ENCODE measurements at regions of chr15 and their contacts with region 1.

Region 1: DNA sequence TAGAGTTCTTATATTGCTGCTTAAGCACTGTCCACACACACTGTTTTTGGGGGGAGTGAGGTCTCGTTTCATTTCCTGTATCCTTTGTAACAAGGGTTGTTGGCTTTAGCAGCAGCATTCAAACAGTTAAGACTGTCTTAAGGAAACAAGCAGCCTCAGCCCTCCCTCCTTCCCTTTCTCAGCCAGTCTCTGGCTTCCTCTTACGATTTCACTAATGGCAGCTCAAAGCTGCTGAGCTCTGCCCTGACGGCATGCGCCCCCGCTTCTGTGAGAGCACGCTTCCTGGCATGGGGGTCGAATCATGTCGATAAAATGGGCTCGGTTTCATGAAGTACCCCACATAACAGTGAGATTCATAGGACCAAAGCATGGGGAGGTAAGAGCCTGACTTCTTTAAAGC is 105.0 kb downstream of the KLHL25 start:
- DNase-seq: peak; percentile 53 to 83 (median 70)
- ATAC-seq: peak; percentile 79 to 90 (median 84)
- H3K4me3 ChIP-seq: peak overlapping the region; percentile 65 to 94
- H3K4me3 Mint-ChIP-seq: peak overlapping the region; percentile 96 to 98 (median 98)
- H3K27ac ChIP-seq: peak overlapping the region; percentile 93
- H3K27ac Mint-ChIP-seq: peak overlapping the region; percentile 98 to 99
- H3K4me1 ChIP-seq: peaks cover 33 to 51% of the 10 kb centered on the region in 2 experiments
- H3K4me1 Mint-ChIP-seq: peaks cover 70 to 77% (median 76%) of the 10 kb centered on the region in 3 donors
- H3K27me3 ChIP-seq: no peaks in the 10 kb centered on the region
- H3K27me3 Mint-ChIP-seq: no peaks in the 10 kb centered on the region

Region 2: DNA sequence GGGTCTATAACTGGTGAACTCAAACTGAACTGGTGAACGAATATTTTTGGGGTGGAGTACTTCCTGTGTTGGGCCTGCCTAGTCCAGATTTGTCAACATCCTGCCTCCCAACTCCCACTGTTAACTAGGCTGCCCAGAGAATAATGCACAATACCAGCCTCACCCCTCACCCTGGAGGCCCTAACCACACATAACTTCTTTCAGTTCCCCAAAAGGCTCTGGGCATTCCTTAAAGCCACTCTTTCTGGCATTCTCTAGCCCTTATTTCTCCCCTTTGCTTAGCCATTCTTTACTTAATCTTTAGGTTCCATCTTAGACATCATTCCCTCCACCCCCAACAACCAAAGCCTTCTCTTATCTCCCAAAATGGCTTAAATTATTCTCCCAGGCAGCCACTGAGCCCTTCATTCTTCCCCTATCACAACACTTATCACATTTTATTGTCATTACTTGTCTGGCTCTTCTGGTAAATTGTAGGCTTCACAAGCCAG is 964.7 kb before region 1 on chr15:
- CTCF ChIA-PET with region 1: no interaction called
- POLR2A ChIA-PET with region 1: no interaction called
- DNase-seq: peak in 16 of 35 experiments; percentile 9 to 53 (median 26)
- ATAC-seq: peak; percentile 68 to 88 (median 78)
- H3K4me3 ChIP-seq: no peak overlapping the region
- H3K4me3 Mint-ChIP-seq: peak overlapping the region; percentile 55 to 66 (median 66)
- H3K27ac ChIP-seq: peak overlapping the region; percentile 83
- H3K27ac Mint-ChIP-seq: peak overlapping the region; percentile 97 to 98
- H3K4me1 ChIP-seq: peaks cover 37 to 65% of the 10 kb centered on the region in 2 experiments
- H3K4me1 Mint-ChIP-seq: peaks cover 52 to 66% (median 65%) of the 10 kb centered on the region in 3 donors
- H3K27me3 ChIP-seq: no peaks in the 10 kb centered on the region
- H3K27me3 Mint-ChIP-seq: no peaks in the 10 kb centered on the region

Region 3: GRCh38 chr15:85554852-85555521 is 134.7 kb before region 1 on chr15:
- CTCF ChIA-PET with region 1: no interaction called
- POLR2A ChIA-PET with region 1: no interaction called
- DNase-seq: no peak
- ATAC-seq: no peak
- H3K4me3 ChIP-seq: no peak overlapping the region
- H3K4me3 Mint-ChIP-seq: no peak overlapping the region
- H3K27ac ChIP-seq: no peak overlapping the region
- H3K27ac Mint-ChIP-seq: peak overlapping the region; percentile 24 to 33
- H3K4me1 ChIP-seq: peaks cover 6 to 7% of the 10 kb centered on the region in 2 experiments
- H3K4me1 Mint-ChIP-seq: peaks cover 44 to 55% (median 51%) of the 10 kb centered on the region in 3 donors
- H3K27me3 ChIP-seq: no peaks in the 10 kb centered on the region
- H3K27me3 Mint-ChIP-seq: no peaks in the 10 kb centered on the region

Region 4: DNA sequence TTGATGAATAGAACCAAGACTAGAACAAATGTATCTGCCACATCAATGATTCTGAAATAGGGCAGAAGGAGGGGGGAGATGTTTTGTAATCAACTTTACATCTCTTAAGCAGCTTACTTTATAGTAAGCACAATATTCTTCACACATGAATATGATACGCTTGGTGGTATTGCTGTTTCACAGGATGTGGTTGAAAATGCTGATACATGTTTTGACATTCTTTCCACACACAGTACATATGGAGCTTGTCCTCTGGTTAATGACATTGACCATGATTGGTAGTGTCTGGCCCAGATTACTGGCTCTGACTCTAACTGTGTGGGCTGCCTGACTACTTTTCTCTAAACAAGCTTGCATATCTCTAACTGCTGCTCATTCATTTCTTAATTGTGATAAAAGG is 63.9 kb before region 1 on chr15:
- CTCF ChIA-PET with region 1: no interaction called
- POLR2A ChIA-PET with region 1: interaction called in 1 of 2 experiments, 10 read pairs
- DNase-seq: peak in 14 of 35 experiments; percentile 6 to 70 (median 26)
- ATAC-seq: peak; percentile 64 to 82 (median 77)
- H3K4me3 ChIP-seq: no peak overlapping the region
- H3K4me3 Mint-ChIP-seq: peak overlapping the region; percentile 11 to 69 (median 66)
- H3K27ac ChIP-seq: peak overlapping the region; percentile 69
- H3K27ac Mint-ChIP-seq: peak overlapping the region; percentile 81 to 96
- H3K4me1 ChIP-seq: peaks cover 27 to 29% of the 10 kb centered on the region in 2 experiments
- H3K4me1 Mint-ChIP-seq: peaks cover 71 to 78% (median 77%) of the 10 kb centered on the region in 3 donors
- H3K27me3 ChIP-seq: no peaks in the 10 kb centered on the region
- H3K27me3 Mint-ChIP-seq: no peaks in the 10 kb centered on the region

Region 5: DNA sequence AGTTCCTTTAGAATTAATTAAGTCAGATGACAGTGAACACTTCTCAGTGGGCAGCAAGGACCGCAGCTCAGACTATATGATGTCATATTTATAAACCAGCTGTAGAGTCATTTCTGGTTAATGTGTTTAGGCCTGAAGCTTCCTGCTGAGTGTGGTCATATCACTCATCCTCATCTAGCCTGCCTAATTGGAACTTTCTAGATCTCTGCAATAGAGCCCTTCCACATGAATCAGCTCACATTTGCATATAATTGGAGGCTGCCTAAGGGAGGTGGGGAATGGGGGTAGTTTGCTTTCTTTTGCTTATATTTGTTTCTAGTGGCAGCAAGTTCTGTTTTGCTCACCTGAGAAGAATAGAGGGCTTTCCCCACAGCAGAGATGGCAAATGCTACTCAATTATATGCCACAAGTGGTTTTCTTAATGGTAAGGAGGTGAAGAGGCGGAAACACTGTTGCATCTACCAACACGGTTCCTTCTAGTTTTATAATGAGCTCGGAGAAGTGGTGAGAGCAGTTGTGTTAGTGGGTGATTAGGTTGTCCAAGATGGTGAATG is 43.1 kb before region 1 on chr15:
- CTCF ChIA-PET with region 1: interaction called in 1 of 2 experiments, 4 read pairs
- POLR2A ChIA-PET with region 1: interaction called in 1 of 2 experiments, 12 read pairs
- DNase-seq: peak in 21 of 35 experiments; percentile 3 to 78 (median 24)
- ATAC-seq: peak; percentile 63 to 80 (median 70)
- H3K4me3 ChIP-seq: no peak overlapping the region
- H3K4me3 Mint-ChIP-seq: peak overlapping the region in 1 of 3 donors; percentile 12
- H3K27ac ChIP-seq: peak overlapping the region; percentile 90
- H3K27ac Mint-ChIP-seq: peak overlapping the region; percentile 86 to 89
- H3K4me1 ChIP-seq: peaks cover 11 to 36% of the 10 kb centered on the region in 2 experiments
- H3K4me1 Mint-ChIP-seq: peaks cover 38 to 55% (median 52%) of the 10 kb centered on the region in 3 donors
- H3K27me3 ChIP-seq: no peaks in the 10 kb centered on the region
- H3K27me3 Mint-ChIP-seq: no peaks in the 10 kb centered on the region

Region 6: DNA sequence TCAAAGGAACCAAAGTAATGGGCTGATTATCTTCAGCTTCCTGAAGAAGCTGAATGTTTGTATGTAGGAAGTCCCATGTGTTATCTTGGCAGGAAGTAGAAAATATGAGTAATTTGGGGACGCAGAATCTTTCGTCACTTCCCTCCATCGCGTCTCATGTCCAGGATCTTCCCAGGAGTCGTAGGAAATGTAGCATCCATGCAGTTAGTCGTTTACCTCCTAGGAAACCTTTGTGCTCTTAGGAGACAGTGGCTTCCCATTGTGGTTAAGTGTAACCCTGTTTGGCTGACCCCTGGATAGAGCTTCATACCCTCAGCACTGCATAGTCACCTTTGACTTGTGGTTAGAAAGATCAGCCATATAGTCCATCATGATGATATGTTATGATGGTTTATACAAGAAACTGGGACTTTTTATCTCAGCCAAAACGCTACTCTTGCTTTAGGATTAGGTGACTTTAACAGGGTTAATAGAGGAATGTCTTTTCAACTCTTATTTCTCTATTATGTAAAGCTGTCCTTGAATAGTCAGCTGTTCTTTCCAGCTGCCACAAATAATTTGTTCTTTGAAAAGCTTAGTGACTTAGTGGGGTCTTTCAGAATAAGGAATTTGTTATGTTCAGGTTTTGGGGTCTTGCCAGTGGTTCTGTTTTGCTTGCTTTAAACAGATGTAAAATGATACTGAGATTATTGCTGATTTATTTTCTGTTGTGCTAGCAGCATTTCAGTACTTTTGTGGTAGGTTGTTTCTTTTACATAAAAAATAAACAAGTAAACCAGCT is 12.8 kb after region 1 on chr15:
- CTCF ChIA-PET with region 1: interaction called in 1 of 2 experiments, 19 read pairs
- POLR2A ChIA-PET with region 1: interaction called, 4 to 42 read pairs
- DNase-seq: peak in 6 of 35 experiments; percentile 18 to 77 (median 26)
- ATAC-seq: peak; percentile 15 to 50 (median 46)
- H3K4me3 ChIP-seq: peak overlapping the region; percentile 32 to 36
- H3K4me3 Mint-ChIP-seq: peak overlapping the region; percentile 67 to 80 (median 74)
- H3K27ac ChIP-seq: peak overlapping the region; percentile 91
- H3K27ac Mint-ChIP-seq: peak overlapping the region; percentile 89 to 98
- H3K4me1 ChIP-seq: peaks cover 41 to 67% of the 10 kb centered on the region in 2 experiments
- H3K4me1 Mint-ChIP-seq: peaks cover 74 to 86% (median 84%) of the 10 kb centered on the region in 3 donors
- H3K27me3 ChIP-seq: no peaks in the 10 kb centered on the region
- H3K27me3 Mint-ChIP-seq: no peaks in the 10 kb centered on the region

Region 7: DNA sequence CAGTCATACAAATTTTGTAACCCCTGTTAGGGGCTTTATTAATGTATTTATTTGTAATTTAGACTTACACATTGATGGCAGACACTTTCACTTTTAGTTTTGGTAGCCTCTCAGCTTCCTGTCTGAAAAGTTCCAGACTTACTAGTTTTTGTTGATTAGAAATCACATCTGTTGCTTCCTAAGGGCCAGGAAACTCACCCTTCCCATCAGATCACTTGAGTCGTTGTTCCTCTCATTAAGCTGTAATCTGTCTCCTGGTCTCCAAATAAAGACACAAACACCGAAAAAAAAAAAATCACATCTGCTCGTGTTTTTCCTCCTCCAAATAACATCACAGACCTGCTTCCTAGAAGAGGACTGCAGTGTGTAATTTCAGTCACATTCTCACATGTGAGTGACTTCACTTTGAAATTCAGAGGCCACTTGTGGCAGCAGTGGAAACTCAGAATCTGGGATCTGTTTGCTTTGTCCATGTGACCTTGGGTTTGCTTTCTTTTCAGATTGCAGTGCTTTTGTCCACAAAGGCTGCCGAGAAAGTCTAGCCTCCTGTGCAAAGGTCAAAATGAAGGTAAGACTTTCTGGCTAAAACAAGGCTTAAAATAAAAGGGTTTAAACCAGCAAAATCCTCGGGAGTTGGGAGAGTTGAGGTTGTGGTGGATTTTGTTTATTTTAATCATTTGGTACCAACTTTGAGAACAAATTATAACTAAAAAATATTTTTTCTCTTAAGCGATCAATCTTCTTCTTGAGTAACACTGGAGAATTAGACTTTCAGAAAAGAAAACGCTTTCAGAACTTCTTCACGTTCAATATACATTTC is 18.0 kb after region 1 on chr15:
- CTCF ChIA-PET with region 1: interaction called in 1 of 2 experiments, 19 read pairs
- POLR2A ChIA-PET with region 1: interaction called, 4 to 42 read pairs
- DNase-seq: peak in 1 of 35 experiments; percentile 73
- ATAC-seq: peak; percentile 38 to 65 (median 42)
- H3K4me3 ChIP-seq: peak overlapping the region; percentile 34 to 46
- H3K4me3 Mint-ChIP-seq: peak overlapping the region; percentile 73 to 84 (median 82)
- H3K27ac ChIP-seq: peak overlapping the region; percentile 91
- H3K27ac Mint-ChIP-seq: peak overlapping the region; percentile 95 to 98
- H3K4me1 ChIP-seq: peaks cover 43 to 65% of the 10 kb centered on the region in 2 experiments
- H3K4me1 Mint-ChIP-seq: peaks cover 74 to 88% (median 87%) of the 10 kb centered on the region in 3 donors
- H3K27me3 ChIP-seq: no peaks in the 10 kb centered on the region
- H3K27me3 Mint-ChIP-seq: no peaks in the 10 kb centered on the region

Measured in T-cell (primary cell).